Heart left ventricle (tissue), 16 donors: ENCODE measurements at regions of chr3 and their contacts with region 1.

Region 1: DNA sequence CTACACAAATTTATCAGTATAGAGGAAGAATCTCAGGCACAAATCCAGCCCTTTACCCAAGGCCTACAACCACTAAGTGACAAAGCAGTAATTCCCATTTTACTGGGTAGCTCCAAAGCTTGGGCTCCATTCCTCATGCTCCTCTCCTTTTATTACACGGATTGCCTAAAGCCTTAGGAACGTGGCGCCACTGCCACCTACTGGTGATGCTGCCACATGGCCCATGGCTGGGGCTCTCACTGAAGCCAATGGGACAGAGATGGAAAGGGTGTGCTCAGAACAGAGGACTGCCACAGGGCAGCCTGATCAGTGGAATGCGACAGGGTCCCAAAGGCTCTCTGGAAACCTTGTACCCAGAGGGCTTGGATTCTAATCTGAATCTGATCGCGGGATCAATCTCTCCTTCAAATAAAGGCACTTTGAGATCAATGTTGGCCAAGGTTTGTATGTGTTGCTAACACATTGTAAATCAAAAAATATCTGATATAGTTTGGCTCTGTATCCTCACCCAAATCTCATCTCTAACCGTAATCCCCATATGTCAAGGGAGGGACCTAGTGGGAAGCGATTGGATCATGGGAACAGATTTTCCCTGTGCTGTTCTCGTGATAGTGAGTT is 33.5 kb upstream of the LYZL4 start:
- DNase-seq: peak; percentile 74 to 90 (median 82)
- ATAC-seq: peak; percentile 86 to 97 (median 95)
- H3K4me3 ChIP-seq: no peak overlapping the region
- H3K27ac ChIP-seq: no peak overlapping the region
- H3K4me1 ChIP-seq: no peaks in the 10 kb centered on the region
- H3K27me3 ChIP-seq: peaks cover 0 to 5% (median 2%) of the 10 kb centered on the region in 9 donors
- CTCF ChIP-seq: peak; percentile 92 to 99 (median 96)
- POLR2A ChIP-seq: no peak

Region 2: GRCh38 chr3:41893977-41894376 is 550.0 kb before region 1 on chr3:
- intact Hi-C with region 1: loop called in 9 of 10 experiments (anchors 2 to 10 kb)
- DNase-seq: peak in 1 of 5 donors; percentile 12
- ATAC-seq: no peak
- H3K4me3 ChIP-seq: no peak overlapping the region
- H3K27ac ChIP-seq: no peak overlapping the region
- H3K4me1 ChIP-seq: peaks cover 0 to 7% (median 0%) of the 10 kb centered on the region in 12 donors
- H3K27me3 ChIP-seq: no peaks in the 10 kb centered on the region
- CTCF ChIP-seq: peak; percentile 31 to 71 (median 63)
- POLR2A ChIP-seq: no peak

Region 3: GRCh38 chr3:42101048-42101447 is 342.9 kb before region 1 on chr3:
- intact Hi-C with region 1: loop called in 1 of 10 experiments (anchors 10 kb)
- DNase-seq: peak; percentile 37 to 67 (median 56)
- ATAC-seq: peak; percentile 66 to 77 (median 70)
- H3K4me3 ChIP-seq: no peak overlapping the region
- H3K27ac ChIP-seq: peak overlapping the region; percentile 25 to 71 (median 64)
- H3K4me1 ChIP-seq: peaks cover 20 to 73% (median 66%) of the 10 kb centered on the region in 12 donors
- H3K27me3 ChIP-seq: no peaks in the 10 kb centered on the region
- CTCF ChIP-seq: no peak
- POLR2A ChIP-seq: no peak

Region 4: DNA sequence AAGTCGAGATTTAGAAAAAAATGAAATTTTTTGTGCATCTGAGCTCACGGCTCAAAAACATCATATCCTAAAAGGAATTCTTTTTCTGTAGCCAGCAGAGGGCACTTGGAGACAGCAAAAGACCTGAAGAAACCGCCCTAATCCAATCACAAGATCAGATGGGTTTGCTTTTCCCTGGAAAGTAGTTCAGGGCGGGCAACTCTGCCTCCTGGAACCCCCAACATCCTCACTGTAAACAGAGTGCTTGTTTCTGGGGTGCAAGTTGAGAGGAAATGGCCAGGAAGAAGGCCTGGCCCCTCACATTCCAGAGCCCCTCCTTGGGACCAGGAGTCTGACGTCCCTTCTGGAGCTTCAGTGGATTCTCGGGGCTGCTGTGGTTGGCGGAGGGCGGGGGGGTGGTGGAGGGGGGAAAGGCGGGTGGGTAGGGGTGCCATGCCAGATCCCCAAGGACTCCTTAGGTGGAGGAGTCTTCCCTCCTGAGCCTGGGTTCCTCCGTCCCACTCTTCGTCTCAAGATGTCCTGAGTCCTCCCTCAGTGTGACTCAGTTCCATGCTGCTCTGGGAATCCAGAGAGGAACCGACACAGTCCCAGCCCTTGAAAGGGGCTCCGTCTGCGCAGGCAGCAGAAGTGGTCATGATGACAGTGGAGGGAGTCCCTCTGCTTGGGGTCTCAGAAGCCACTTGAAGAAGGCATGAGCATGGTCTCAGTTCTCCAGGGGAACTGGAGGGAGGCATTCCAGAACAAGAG is 213.8 kb before region 1 on chr3:
- intact Hi-C with region 1: loop called in 8 of 10 experiments (anchors 1 to 5 kb)
- DNase-seq: no peak
- ATAC-seq: peak in 2 of 4 donors; percentile 12 to 42
- H3K4me3 ChIP-seq: peak overlapping the region in 1 of 12 donors; percentile 29
- H3K27ac ChIP-seq: no peak overlapping the region
- H3K4me1 ChIP-seq: peaks cover 0 to 8% (median 0%) of the 10 kb centered on the region in 12 donors
- H3K27me3 ChIP-seq: peaks cover 0 to 4% (median 0%) of the 10 kb centered on the region in 9 donors
- CTCF ChIP-seq: peak in 10 of 12 donors; percentile 28 to 66 (median 54)
- POLR2A ChIP-seq: no peak

Region 5: DNA sequence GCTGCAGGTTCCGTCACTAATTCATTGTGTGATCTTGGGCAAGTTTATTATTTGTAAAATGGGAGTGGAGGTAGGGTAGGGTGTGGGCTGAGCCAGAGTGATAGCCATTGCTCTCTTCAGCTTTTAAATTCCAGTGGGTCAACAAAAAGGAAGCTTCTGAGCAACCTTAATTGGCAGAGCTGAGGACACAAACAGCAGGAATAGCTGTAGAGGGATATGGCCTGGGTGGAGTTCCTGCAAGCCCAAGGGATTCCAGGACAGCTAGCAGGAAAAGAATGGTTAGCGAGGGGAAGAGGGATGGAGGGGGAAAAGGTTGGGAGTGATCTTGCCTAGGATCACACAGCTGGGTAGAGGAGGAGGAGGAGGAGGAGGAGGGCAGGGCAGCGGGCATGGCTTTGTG is 189.4 kb before region 1 on chr3:
- intact Hi-C with region 1: loop called in 5 of 10 experiments (anchors 2 to 5 kb)
- DNase-seq: no peak
- ATAC-seq: no peak
- H3K4me3 ChIP-seq: no peak overlapping the region
- H3K27ac ChIP-seq: no peak overlapping the region
- H3K4me1 ChIP-seq: no peaks in the 10 kb centered on the region
- H3K27me3 ChIP-seq: peaks cover 0 to 31% (median 8%) of the 10 kb centered on the region in 9 donors
- CTCF ChIP-seq: no peak
- POLR2A ChIP-seq: no peak

Region 6: DNA sequence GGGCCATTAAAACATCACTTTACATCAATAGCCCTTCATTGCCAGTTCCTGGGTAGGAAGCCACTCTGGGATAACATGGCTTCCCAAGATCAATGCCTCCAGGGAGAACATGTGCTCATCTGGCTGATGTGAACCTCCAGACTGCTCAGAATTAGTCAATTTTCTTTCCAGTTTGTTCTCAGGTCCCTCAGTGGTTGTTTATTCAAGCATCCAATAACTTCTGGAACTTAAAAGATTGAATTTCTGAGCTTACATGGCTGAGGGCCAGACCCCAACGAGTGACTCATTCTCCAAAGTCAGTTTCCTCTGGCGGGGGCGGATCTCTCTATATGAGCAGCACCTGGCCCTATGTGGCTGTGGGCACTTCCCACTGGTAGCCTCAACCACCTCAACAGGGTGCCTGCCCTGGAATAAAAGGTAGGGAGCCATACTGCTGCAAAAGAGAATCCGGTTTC is 67.6 kb before region 1 on chr3:
- intact Hi-C with region 1: no loop called
- DNase-seq: peak in 4 of 5 donors; percentile 29 to 53 (median 35)
- ATAC-seq: peak in 2 of 4 donors; percentile 48 to 66
- H3K4me3 ChIP-seq: no peak overlapping the region
- H3K27ac ChIP-seq: no peak overlapping the region
- H3K4me1 ChIP-seq: peaks cover 0 to 22% (median 0%) of the 10 kb centered on the region in 12 donors
- H3K27me3 ChIP-seq: peaks cover 0 to 3% (median 0%) of the 10 kb centered on the region in 9 donors
- CTCF ChIP-seq: no peak
- POLR2A ChIP-seq: no peak

Region 7: GRCh38 chr3:42547401-42547945 is 103.5 kb after region 1 on chr3:
- intact Hi-C with region 1: loop called in 3 of 10 experiments (anchors 5 kb)
- DNase-seq: peak; percentile 65 to 82 (median 68)
- ATAC-seq: peak; percentile 40 to 64 (median 50)
- H3K4me3 ChIP-seq: no peak overlapping the region
- H3K27ac ChIP-seq: peak overlapping the region in 5 of 12 donors; percentile 2 to 54 (median 26)
- H3K4me1 ChIP-seq: peaks cover 0 to 28% (median 8%) of the 10 kb centered on the region in 12 donors
- H3K27me3 ChIP-seq: no peaks in the 10 kb centered on the region
- CTCF ChIP-seq: peak; percentile 85 to 99 (median 94)
- POLR2A ChIP-seq: no peak

Region 8: DNA sequence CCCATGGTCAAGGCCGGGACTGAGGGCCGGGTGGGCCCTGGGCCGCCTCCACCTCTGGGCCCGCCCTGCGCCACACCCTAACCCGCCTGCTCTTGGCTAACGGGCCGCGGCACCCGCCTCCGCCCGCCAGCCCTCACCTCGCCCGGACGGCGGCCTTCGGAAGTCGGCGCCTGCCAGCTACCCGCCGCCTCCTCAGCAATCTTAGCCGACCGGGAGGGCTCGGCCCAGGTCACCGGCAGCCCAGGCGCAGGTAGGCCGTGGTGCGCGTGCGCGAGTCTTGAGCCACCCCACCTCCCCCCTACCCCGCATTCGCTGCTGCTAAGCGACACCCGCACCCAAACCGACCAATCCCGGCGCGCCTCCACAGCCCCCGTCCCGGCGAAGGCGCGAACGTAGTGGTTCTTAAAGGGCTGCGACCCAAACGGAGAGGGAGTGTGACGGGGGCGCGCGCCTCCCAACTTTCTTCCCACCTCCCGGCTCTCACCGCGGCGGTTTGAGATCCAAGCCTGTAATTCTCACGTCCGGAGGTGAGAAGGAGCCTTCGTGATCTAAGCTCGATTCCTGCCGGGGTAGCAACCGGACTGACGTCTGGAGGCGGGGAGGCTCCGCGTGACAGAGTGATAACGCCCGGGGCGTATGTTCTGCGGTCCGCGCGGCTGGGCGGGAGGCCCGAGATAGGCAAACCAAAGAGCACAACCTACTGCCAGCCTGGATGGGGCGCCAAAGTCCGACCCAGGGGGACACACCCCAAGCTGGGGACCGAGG is 138.0 kb after region 1 on chr3 and contains the start of gene SEC22C:
- intact Hi-C with region 1: no loop called
- DNase-seq: peak; percentile 95 to 98 (median 96)
- ATAC-seq: peak; percentile 98 to 99 (median 99)
- H3K4me3 ChIP-seq: peak within 1 kb of the TSS; percentile 79 to 96 (median 88)
- H3K27ac ChIP-seq: peak within 1 kb of the TSS; percentile 80 to 95 (median 89)
- H3K4me1 ChIP-seq: peaks cover 0 to 25% (median 14%) of the 10 kb centered on the region in 12 donors
- H3K27me3 ChIP-seq: no peaks in the 10 kb centered on the region
- CTCF ChIP-seq: peak in 9 of 12 donors; percentile 20 to 55 (median 37)
- POLR2A ChIP-seq: peak; percentile 84 to 96
- total RNA-seq, gene SEC22C: 19.9 to 40.5 (median 28.9) TPM